Left cardiac atrium (tissue), 4 donors: ENCODE measurements at regions of chr3 and their contacts with region 1.

Region 1: DNA sequence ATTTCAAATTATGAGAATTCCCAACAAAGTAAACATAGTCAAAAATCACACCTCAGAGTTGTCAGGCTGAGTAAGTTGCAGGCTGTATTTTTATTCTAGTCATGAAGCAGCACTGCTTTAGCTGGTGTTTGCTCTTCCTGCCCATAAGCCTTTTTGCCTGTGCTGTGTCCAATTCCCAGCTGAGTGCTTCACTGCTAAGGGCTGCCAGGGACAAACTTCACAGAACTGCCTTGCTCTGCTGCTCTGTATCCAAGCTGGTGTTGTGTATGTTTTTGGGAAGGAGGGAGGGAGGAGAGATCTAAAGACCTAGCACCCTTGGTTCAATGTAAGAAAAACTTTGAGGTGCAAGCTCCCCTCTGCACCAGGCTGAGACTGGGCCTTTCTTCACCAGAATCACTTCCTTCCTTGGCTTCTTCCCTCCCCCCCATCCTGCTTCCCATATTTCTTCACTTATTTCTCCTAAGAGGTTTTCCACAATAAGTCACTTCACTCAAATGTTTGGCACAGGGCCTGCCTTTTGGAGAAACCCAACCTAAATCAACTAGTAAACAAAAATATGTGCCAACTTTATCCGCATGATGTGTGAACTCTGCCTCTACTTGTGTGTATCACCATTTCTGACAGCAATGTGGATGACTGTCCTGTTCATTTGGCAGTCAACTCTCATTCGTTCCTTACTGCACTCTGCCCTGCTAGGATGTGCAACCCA is 156.1 kb downstream of the TBL1XR1 start:
- DNase-seq: peak; percentile 30
- ATAC-seq: peak; percentile 83 to 88

Region 2: GRCh38 chr3:176767385-176767784 is 273.8 kb before region 1 on chr3:
- intact Hi-C with region 1: no loop called
- DNase-seq: no peak
- ATAC-seq: peak in 1 of 2 donors; percentile 74

Region 3: DNA sequence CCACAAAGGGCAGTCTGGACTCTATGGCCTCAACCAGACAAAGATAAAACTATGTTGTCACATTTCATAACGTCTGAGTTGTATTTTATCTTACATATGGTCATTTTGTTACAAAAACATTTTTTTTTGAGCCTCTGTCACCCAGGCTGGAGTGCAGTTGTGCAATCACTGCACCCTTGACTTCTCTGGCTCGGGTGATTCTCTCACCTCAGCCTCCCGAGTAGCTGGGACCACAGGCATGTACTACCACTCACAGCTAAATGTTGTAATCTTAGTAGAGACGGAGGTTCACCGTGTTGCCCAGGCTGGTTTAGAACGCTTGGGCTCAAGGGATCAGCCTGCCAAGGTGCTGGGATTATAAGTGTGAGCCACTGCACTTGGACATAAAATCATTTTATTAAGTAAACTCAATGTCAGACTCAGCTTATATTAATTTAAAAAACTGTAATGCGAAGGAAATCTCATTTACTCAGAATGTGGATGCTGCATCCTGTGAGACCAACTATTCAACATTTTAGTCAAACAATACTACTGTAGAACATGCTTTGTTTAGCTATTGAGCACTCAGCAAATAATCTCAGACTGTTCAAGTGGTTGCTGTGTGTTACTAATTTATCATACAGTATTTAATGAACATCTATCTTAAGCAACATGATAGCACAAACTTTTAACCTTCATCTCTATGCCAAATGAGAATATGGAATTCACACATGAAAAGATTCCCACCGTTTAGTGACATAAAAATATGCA is 53.1 kb before region 1 on chr3:
- intact Hi-C with region 1: no loop called
- DNase-seq: no peak
- ATAC-seq: no peak

Region 4: DNA sequence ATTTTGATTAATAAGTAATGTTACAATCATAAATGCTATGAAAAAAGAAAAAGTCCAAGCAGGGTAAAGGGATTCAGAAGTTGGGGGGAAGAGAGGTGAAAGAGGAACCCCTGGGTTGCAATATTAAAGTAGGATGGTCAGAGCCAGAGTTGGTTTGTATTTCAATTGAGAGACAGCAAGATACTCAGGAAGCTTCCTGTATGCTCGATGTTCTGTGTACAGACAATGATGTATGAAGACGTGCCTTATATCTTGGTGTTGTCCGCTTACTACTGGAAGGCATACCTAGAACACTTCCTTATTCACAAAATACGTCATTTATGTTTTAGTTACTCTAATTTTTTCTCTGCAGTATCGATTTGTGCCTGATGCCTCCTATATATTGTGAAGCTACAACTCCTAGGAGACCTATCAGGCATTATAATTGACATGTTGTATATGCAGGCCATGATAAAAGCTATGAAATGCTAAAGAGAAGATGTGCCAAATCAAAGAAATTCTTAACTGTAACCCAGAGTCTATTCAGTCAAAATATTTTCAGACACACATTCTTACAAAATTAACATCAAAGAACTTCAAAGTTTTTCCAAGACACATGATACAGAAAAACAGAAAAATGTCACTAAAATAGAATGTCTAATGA is 68.6 kb after region 1 on chr3:
- intact Hi-C with region 1: no loop called
- DNase-seq: no peak
- ATAC-seq: no peak

Region 5: DNA sequence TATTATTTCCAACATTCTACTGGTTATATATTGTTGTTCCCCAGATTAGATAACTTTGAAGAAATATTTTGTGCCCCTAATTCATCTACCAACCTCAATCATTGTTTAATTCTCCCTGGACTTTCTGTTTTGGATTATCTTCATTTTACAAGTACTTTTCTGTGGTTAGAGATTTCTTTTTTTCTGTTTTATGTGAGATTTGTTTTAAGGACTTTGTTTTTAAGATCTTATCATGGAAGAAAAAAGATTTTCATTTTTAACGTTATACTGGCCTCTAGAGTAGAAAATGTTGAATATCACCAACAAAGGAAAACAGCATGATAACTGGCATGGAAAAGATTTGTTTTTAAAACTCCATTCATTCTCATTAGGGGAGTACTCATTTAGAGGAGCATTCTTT is 1284.2 kb after region 1 on chr3:
- intact Hi-C with region 1: loop called in 1 of 2 experiments (anchors 10 kb)
- DNase-seq: no peak
- ATAC-seq: no peak

Region 6: DNA sequence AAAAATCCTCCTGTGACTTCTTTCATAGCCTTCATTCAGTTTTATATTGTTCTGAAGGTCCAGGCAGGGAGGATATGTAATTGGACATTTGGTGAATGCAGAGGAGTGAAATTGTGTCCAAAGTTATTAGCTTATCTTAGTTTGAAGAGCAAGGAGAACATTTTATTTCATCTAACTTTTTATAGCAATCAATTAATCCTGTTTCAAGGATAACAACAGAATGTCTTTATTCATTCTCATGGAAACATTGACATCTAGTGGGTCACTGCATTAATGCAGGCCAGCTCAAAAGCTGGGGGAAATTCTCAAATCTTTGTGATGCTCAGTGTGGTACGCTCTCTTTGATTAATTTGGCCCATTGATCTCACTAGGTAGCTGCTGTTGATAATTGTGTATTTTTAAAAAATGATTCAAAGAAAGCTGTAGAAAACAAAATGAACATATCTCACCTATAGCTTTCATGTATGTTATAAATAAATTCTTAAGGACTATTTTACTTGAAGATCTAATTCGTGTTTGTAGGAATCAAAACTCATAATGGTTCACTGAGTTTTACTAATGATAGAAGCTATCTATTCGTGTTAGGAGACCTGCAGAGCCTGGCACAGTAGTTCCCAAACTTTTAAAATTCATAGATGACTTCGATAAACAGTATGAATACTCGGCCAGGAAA is 1344.2 kb after region 1 on chr3:
- intact Hi-C with region 1: loop called in 1 of 2 experiments (anchors 5 kb)
- DNase-seq: no peak
- ATAC-seq: peak; percentile 60 to 70